Activated T-helper 1 cell treated with anti-CD3 and anti-CD28 coated beads, Interleukin-12 subunit alpha, Interleukin-12 subunit beta, Interleukin-2, Interleukin-4 antibody, amounts not matched to agents 30 ng/mL and 10 ng/mL and 1 ng/mL, durations not matched to agents 14 hours and 24 hours and 36 hours (primary cell): ENCODE measurements at regions of chr13 and their contacts with region 1.

Region 1: GRCh38 chr13:108508263-108508662 is 121.1 kb upstream of the MYO16 start:
- DNase-seq: no peak
- H3K4me3 Mint-ChIP-seq: no peak overlapping the region
- H3K27ac Mint-ChIP-seq: no peak overlapping the region
- H3K4me1 Mint-ChIP-seq: no peaks in the 10 kb centered on the region
- H3K27me3 Mint-ChIP-seq: no peaks in the 10 kb centered on the region

Region 2: GRCh38 chr13:108227651-108228272 is 280.5 kb before region 1 on chr13:
- intact Hi-C with region 1: loop called (anchors 10 kb)
- DNase-seq: no peak
- H3K4me3 Mint-ChIP-seq: no peak overlapping the region
- H3K27ac Mint-ChIP-seq: no peak overlapping the region
- H3K4me1 Mint-ChIP-seq: peaks cover 31% of the 10 kb centered on the region
- H3K27me3 Mint-ChIP-seq: no peaks in the 10 kb centered on the region

Region 3: GRCh38 chr13:108322206-108322824 is 185.9 kb before region 1 on chr13:
- intact Hi-C with region 1: loop called (anchors 5 kb)
- DNase-seq: no peak
- H3K4me3 Mint-ChIP-seq: no peak overlapping the region
- H3K27ac Mint-ChIP-seq: no peak overlapping the region
- H3K4me1 Mint-ChIP-seq: no peaks in the 10 kb centered on the region
- H3K27me3 Mint-ChIP-seq: peaks cover 15% of the 10 kb centered on the region

Region 4: DNA sequence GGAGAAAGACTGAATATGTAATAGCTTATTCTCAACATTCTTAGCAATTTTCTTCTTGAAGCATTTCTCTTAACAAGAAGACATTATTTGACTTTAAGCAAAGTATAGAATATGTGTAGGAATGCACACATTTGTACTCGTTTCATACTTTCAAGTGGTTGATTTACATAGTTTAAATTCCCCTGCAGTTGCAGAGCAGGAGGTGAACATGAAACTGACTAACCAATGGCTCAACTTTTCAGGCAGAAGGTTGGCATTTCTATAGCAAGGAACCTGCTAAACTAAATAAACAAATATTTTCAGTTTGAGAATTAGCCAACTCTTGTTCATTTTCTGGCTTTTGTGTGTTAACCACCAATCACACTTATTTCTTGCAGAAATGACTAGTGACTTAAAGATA is 24.3 kb before region 1 on chr13:
- intact Hi-C with region 1: no loop called
- DNase-seq: no peak
- H3K4me3 Mint-ChIP-seq: no peak overlapping the region
- H3K27ac Mint-ChIP-seq: no peak overlapping the region
- H3K4me1 Mint-ChIP-seq: no peaks in the 10 kb centered on the region
- H3K27me3 Mint-ChIP-seq: no peaks in the 10 kb centered on the region

Region 5: GRCh38 chr13:108495646-108496361 is 12.5 kb before region 1 on chr13:
- intact Hi-C with region 1: no loop called
- DNase-seq: no peak
- H3K4me3 Mint-ChIP-seq: no peak overlapping the region
- H3K27ac Mint-ChIP-seq: no peak overlapping the region
- H3K4me1 Mint-ChIP-seq: no peaks in the 10 kb centered on the region
- H3K27me3 Mint-ChIP-seq: peaks cover 36% of the 10 kb centered on the region